ENCODE measurements at regions of chr9 and their contacts with region 1.

Region 1: GRCh38 chr9:128412120-128412790 is 8.4 kb upstream of the CERCAM start:
- DNase-seq: peak; percentile 46
- ATAC-seq: no peak
- H3K4me3 ChIP-seq: no peak overlapping the region
- H3K4me3 Mint-ChIP-seq: no peak overlapping the region
- H3K27ac ChIP-seq: no peak overlapping the region
- H3K27ac Mint-ChIP-seq: no peak overlapping the region
- H3K4me1 ChIP-seq: no peaks in the 10 kb centered on the region
- H3K4me1 Mint-ChIP-seq: no peaks in the 10 kb centered on the region
- H3K27me3 ChIP-seq: peaks cover 0 to 44% (median 10%) of the 10 kb centered on the region in 4 experiments
- H3K27me3 Mint-ChIP-seq: peaks cover 48% of the 10 kb centered on the region
- CTCF ChIP-seq: peak; percentile 44

Region 2: GRCh38 chr9:128296337-128297220 is 115.7 kb before region 1 on chr9:
- CTCF ChIA-PET with region 1: interaction called, 3 read pairs
- POLR2A ChIA-PET with region 1: no interaction called
- intact Hi-C with region 1: loop called (anchors 10 kb)
- DNase-seq: no peak
- ATAC-seq: no peak
- H3K4me3 ChIP-seq: no peak overlapping the region
- H3K4me3 Mint-ChIP-seq: no peak overlapping the region
- H3K27ac ChIP-seq: no peak overlapping the region
- H3K27ac Mint-ChIP-seq: no peak overlapping the region
- H3K4me1 ChIP-seq: no peaks in the 10 kb centered on the region
- H3K4me1 Mint-ChIP-seq: no peaks in the 10 kb centered on the region
- H3K27me3 ChIP-seq: no peaks in the 10 kb centered on the region
- H3K27me3 Mint-ChIP-seq: no peaks in the 10 kb centered on the region
- CTCF ChIP-seq: no peak